ENCODE measurements at regions of chr12 and their contacts with region 1.

Region 1: DNA sequence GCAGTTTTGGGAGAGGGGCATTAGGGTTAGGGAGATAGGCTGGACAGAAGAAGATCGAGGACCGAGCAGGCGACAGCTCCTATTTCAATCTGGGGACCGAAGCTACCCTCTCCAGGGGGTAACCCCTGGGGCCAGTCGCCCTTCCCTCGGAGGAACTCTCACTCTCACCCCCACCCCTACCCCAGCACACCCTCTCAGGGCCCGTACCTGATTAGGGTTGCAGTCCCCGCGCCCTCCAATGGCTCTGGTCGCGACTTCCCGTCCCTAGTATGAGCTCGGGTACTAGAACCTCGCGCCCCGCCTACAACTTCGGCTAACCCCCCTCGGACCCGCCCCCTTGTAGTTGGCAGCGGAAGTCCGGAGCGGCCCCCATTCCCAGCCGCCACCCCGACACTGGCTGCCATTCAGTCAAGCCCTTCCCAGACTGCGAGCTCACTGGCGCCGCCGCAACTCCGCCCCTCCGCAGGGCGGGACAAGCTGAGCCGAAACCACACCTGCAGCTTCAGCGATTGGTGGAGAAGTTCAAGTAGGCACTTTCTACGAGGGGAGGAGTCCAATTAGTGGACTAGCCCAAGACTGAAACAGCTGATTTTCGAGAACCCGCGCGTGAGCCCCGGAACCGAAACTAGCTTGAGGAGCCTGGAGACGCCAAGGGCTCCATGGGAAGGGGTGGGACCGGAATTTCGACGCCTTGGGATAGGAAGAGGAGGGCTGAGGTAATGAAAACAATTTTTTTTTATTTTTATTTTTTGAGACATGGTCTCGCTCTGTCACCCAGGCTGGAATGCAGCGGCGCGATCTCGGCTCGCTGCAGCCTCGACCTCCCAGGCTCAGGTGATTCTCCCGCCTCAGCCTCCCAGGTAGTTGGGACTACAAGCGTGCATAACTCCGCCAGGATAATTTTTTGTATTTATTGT is at the start of gene STAT2:
- DNase-seq: peak; percentile 100
- H3K4me3 Mint-ChIP-seq: peak within 1 kb of the TSS; percentile 94
- H3K27ac Mint-ChIP-seq: peak within 1 kb of the TSS; percentile 97
- H3K4me1 Mint-ChIP-seq: peaks cover 8% of the 10 kb centered on the region
- H3K27me3 Mint-ChIP-seq: no peaks in the 10 kb centered on the region
- CTCF ChIP-seq: no peak
- total RNA-seq, gene STAT2: 61.2 and 101 TPM in 2 replicates

Region 2: GRCh38 chr12:56286044-56286830 is 73.9 kb before region 1 on chr12:
- CTCF ChIA-PET with region 1: no interaction called
- POLR2A ChIA-PET with region 1: interaction called, 10 read pairs
- intact Hi-C with region 1: no loop called
- DNase-seq: no peak
- H3K4me3 Mint-ChIP-seq: no peak overlapping the region
- H3K27ac Mint-ChIP-seq: no peak overlapping the region
- H3K4me1 Mint-ChIP-seq: peaks cover 3% of the 10 kb centered on the region
- H3K27me3 Mint-ChIP-seq: no peaks in the 10 kb centered on the region
- CTCF ChIP-seq: no peak

Region 3: GRCh38 chr12:56299853-56300643 is 60.1 kb before region 1 on chr12 and contains the start of gene CS:
- CTCF ChIA-PET with region 1: no interaction called
- POLR2A ChIA-PET with region 1: interaction called, 21 read pairs
- intact Hi-C with region 1: no loop called
- DNase-seq: peak; percentile 99
- H3K4me3 Mint-ChIP-seq: peak within 1 kb of the TSS; percentile 95
- H3K27ac Mint-ChIP-seq: peak within 1 kb of the TSS; percentile 84
- H3K4me1 Mint-ChIP-seq: peaks cover 19% of the 10 kb centered on the region
- H3K27me3 Mint-ChIP-seq: no peaks in the 10 kb centered on the region
- CTCF ChIP-seq: no peak
- total RNA-seq, gene CS: 213 and 257 TPM in 2 replicates

Region 4: DNA sequence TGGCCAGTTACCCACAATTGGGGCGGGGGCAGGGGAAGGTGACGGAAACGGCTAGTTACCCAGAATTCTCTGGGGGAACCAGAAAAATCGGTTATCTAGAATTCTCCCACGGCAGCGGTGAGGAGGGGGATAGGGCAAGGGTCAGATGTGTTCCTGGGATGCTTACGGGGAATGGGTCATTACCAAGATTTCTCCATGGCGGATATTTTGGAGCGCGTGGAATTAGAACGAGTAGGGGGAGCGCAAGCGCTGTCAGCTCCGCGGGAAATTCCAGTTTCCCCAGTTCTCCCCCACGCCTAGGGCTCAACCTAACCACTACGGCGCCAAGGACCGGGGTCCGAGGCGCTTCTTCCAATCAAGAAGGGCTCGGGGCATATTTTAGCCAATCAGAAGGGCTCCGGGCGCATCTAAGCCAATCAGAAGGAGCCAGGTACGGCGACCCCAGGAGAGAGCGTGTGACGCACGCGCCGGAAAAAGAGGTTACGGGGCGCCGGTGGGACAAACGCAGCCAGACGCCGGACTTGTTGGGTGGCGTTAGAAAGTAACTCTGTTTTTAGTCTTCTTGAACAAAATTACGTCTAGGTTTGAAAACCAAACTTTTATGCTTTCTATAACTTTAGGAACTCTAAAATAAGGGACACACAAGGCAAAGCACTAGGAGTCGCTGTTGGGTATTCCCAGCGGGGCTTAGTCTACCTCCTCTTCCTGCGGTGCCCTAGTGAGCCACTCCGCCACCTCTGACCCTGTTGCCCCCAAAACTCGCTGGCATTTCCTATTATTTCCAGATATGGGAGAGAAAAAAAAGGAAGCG is 26.2 kb before region 1 on chr12 and contains the start of gene PAN2:
- CTCF ChIA-PET with region 1: interaction called, 5 read pairs
- POLR2A ChIA-PET with region 1: interaction called, 87 read pairs
- intact Hi-C with region 1: loop called (anchors 1 kb)
- DNase-seq: peak; percentile 99
- H3K4me3 Mint-ChIP-seq: peak within 1 kb of the TSS; percentile 83
- H3K27ac Mint-ChIP-seq: peak within 1 kb of the TSS; percentile 98
- H3K4me1 Mint-ChIP-seq: peaks cover 21% of the 10 kb centered on the region
- H3K27me3 Mint-ChIP-seq: no peaks in the 10 kb centered on the region
- CTCF ChIP-seq: peak; percentile 60
- total RNA-seq, gene PAN2: 72.9 and 80.1 TPM in 2 replicates

Region 5: GRCh38 chr12:56341616-56342015 is 18.5 kb before region 1 on chr12:
- CTCF ChIA-PET with region 1: interaction called, 11 read pairs
- POLR2A ChIA-PET with region 1: interaction called, 87 read pairs
- intact Hi-C with region 1: no loop called
- DNase-seq: no peak
- H3K4me3 Mint-ChIP-seq: no peak overlapping the region
- H3K27ac Mint-ChIP-seq: no peak overlapping the region
- H3K4me1 Mint-ChIP-seq: peaks cover 10% of the 10 kb centered on the region
- H3K27me3 Mint-ChIP-seq: no peaks in the 10 kb centered on the region
- CTCF ChIP-seq: no peak

Region 6: DNA sequence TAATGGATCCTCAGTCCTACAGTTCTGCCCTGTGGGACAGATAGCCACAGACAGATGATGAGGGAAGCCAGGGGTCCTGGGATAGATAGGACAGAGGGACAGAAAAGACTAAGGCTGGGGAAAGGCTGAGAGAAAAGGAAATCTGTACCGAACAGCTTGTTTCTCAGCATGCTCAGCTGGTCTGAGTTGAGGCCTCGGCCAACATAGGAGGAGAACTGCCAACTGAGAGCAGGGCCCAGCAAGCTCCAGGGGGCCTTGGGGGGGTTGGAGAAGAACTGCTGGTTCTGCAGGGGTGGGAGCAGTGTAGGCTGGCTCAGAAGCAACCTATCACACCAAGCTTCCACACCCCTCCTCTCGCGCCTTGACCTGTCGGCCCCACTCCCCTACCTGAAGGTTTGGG is 11.3 kb before region 1 on chr12:
- CTCF ChIA-PET with region 1: interaction called, 4 read pairs
- POLR2A ChIA-PET with region 1: interaction called, 24 read pairs
- intact Hi-C with region 1: no loop called
- DNase-seq: no peak
- H3K4me3 Mint-ChIP-seq: no peak overlapping the region
- H3K27ac Mint-ChIP-seq: no peak overlapping the region
- H3K4me1 Mint-ChIP-seq: no peaks in the 10 kb centered on the region
- H3K27me3 Mint-ChIP-seq: no peaks in the 10 kb centered on the region
- CTCF ChIP-seq: no peak

Region 7: GRCh38 chr12:56448860-56449621 is 88.9 kb after region 1 on chr12 and contains the start of gene TIMELESS:
- CTCF ChIA-PET with region 1: no interaction called
- POLR2A ChIA-PET with region 1: interaction called, 63 read pairs
- intact Hi-C with region 1: no loop called
- DNase-seq: peak; percentile 90
- H3K4me3 Mint-ChIP-seq: peak within 1 kb of the TSS; percentile 76
- H3K27ac Mint-ChIP-seq: peak within 1 kb of the TSS; percentile 90
- H3K4me1 Mint-ChIP-seq: peaks cover 8% of the 10 kb centered on the region
- H3K27me3 Mint-ChIP-seq: no peaks in the 10 kb centered on the region
- CTCF ChIP-seq: no peak
- total RNA-seq, gene TIMELESS: 10.1 and 14.0 TPM in 2 replicates

Measured in MCF 10A (cell line).